ENCODE measurements at regions of chr4 and their contacts with region 1.

Region 1: DNA sequence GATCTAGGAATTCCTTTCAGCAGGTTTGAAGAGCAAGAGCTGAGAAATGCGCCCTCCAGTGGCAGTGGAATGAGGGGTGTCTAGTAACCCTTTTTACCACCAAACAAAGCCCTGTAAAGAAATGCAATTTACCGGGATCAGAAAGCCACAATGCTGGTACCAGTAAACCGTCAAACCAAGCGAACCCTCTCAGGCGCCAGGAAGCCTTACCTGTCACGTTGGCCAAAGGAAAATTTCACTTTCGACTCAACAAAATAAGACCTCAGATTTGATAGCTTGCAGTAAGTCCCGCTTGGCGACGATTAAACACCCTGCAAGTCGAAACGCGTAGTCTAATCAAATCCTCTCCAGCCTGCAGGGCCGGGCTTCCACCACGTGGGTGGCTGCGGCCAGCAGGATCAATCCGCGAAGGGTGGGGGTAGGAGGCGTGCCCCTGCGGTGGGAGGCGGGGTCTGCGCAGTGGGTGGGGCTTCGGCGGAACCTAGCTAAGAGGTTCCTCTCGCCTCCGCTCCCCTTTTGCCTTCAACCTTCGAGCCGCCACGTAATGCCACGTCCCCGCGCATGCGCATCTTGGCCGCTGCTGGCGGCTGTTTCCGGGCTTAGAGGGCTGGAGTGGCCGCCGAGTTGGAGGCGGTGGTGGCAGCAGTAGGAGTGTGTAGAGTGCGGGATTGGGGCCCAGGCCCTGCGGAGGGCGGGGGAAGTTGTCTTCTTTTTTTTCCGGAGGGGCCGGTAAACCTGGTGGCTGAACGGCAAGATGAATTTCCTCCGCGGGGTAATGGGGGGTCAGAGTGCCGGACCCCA is at the start of gene USO1:
- DNase-seq: peak; percentile 99
- ATAC-seq: peak; percentile 91
- H3K4me3 Mint-ChIP-seq: peak within 1 kb of the TSS; percentile 99
- H3K27ac Mint-ChIP-seq: peak within 1 kb of the TSS; percentile 98
- H3K4me1 Mint-ChIP-seq: peaks cover 40% of the 10 kb centered on the region
- H3K27me3 Mint-ChIP-seq: no peaks in the 10 kb centered on the region
- total RNA-seq, gene USO1: 32.5 to 37.5 TPM

Region 2: DNA sequence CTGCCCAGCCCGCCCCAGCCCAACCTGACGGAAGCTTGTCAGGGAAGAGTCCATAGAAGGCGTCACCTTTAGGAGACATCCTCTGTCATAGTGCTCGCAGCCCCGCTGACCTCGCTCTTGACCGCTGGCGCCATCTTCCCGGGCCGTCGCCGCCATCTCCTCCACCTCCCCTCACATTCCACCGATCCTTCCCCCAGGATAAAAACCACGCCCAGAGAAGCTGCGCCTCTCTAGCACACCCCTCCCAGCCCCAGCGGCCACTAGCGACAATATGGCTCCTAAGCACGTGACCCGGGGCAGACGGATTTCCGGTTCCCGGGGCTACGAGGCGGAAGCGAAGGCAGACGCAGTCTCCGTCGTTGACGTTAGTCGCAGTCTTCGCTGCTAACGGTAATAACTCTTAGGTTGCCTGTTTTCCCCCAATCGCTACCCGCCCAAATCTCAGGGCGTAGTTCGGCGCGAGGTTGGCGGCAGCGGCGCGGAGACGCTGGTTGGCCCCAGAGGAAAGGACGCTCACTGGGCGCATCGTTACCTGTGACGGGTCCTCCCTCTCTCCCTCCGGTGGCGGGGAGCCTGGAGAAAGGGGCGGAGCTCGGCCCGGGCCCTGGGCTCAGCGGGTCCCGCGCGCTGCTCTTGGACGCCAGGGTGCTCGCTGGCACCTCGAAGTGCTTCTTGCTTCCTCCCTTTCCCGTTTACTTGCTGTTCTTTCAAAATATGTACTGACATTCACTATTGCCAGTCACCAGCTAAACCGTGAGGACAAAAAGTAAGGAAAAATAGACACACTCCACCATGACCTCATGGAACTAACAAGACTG is 209.9 kb before region 1 on chr4 and contains the starts of genes RCHY1 and THAP6:
- CTCF ChIA-PET with region 1: interaction called, 14 read pairs
- POLR2A ChIA-PET with region 1: interaction called, 9 read pairs
- DNase-seq: peak; percentile 95
- ATAC-seq: peak; percentile 94
- H3K4me3 Mint-ChIP-seq: no peak within 1 kb of the TSS
- H3K27ac Mint-ChIP-seq: peak within 1 kb of the TSS; percentile 100
- H3K4me1 Mint-ChIP-seq: peaks cover 47% of the 10 kb centered on the region
- H3K27me3 Mint-ChIP-seq: no peaks in the 10 kb centered on the region
- total RNA-seq, gene RCHY1: 20.0 to 25.3 TPM
- total RNA-seq, gene THAP6: 16.1 to 16.7 TPM

Region 3: DNA sequence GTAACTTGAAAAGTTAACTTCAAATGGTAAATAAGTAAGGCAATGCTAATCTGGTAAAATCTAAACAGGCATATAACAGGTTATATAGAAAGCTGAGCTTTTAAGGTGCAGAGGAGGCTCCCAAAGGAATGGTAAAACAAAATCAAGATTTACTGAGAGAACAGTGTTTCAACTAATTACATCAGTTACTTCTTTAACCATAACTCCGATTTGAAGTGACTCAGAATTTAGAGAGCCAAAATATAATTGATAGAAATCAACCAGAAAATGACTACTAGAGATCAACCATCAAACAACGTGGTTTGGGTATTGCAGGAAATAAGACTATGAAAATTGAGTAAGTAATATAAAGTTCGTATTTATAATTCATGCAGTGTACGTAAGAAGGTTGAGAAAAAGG is 58.0 kb before region 1 on chr4:
- CTCF ChIA-PET with region 1: interaction called, 47 read pairs
- POLR2A ChIA-PET with region 1: interaction called, 44 read pairs
- DNase-seq: no peak
- ATAC-seq: no peak
- H3K4me3 Mint-ChIP-seq: peak overlapping the region; percentile 41
- H3K27ac Mint-ChIP-seq: peak overlapping the region; percentile 69
- H3K4me1 Mint-ChIP-seq: peaks cover 77% of the 10 kb centered on the region
- H3K27me3 Mint-ChIP-seq: no peaks in the 10 kb centered on the region

Region 4: GRCh38 chr4:75686346-75686745 is 37.9 kb before region 1 on chr4:
- CTCF ChIA-PET with region 1: interaction called, 11 read pairs
- POLR2A ChIA-PET with region 1: interaction called, 14 read pairs
- DNase-seq: peak; percentile 31
- ATAC-seq: peak; percentile 50
- H3K4me3 Mint-ChIP-seq: no peak overlapping the region
- H3K27ac Mint-ChIP-seq: peak overlapping the region; percentile 72
- H3K4me1 Mint-ChIP-seq: peaks cover 43% of the 10 kb centered on the region
- H3K27me3 Mint-ChIP-seq: no peaks in the 10 kb centered on the region

Region 5: GRCh38 chr4:75708218-75708691 is 16.0 kb before region 1 on chr4:
- CTCF ChIA-PET with region 1: interaction called, 115 read pairs
- POLR2A ChIA-PET with region 1: interaction called, 17 read pairs
- DNase-seq: peak; percentile 69
- ATAC-seq: peak; percentile 92
- H3K4me3 Mint-ChIP-seq: no peak overlapping the region
- H3K27ac Mint-ChIP-seq: no peak overlapping the region
- H3K4me1 Mint-ChIP-seq: peaks cover 20% of the 10 kb centered on the region
- H3K27me3 Mint-ChIP-seq: no peaks in the 10 kb centered on the region

Region 6: GRCh38 chr4:76067652-76068286 is 343.5 kb after region 1 on chr4:
- CTCF ChIA-PET with region 1: no interaction called
- POLR2A ChIA-PET with region 1: no interaction called
- DNase-seq: peak; percentile 84
- ATAC-seq: peak; percentile 90
- H3K4me3 Mint-ChIP-seq: no peak overlapping the region
- H3K27ac Mint-ChIP-seq: no peak overlapping the region
- H3K4me1 Mint-ChIP-seq: no peaks in the 10 kb centered on the region
- H3K27me3 Mint-ChIP-seq: no peaks in the 10 kb centered on the region

Measured in activated CD8-positive, alpha-beta T cell treated with anti-CD3 and anti-CD28 coated beads, Interleukin-2, amount 10 ng/mL, durations not matched to agents 7 days and 5 days (primary cell).